ENCODE measurements at regions of chrX and their contacts with region 1.

Region 1: GRCh38 chrX:133792198-133792953 is 193.0 kb downstream of the GPC3 start:
- DNase-seq: peak; percentile 57 to 83 (median 68)
- ATAC-seq: peak; percentile 78 to 81
- H3K4me3 ChIP-seq: peak overlapping the region; percentile 36
- H3K27ac ChIP-seq: no peak overlapping the region
- H3K4me1 ChIP-seq: no peaks in the 10 kb centered on the region
- H3K27me3 ChIP-seq: no peaks in the 10 kb centered on the region

Region 2: DNA sequence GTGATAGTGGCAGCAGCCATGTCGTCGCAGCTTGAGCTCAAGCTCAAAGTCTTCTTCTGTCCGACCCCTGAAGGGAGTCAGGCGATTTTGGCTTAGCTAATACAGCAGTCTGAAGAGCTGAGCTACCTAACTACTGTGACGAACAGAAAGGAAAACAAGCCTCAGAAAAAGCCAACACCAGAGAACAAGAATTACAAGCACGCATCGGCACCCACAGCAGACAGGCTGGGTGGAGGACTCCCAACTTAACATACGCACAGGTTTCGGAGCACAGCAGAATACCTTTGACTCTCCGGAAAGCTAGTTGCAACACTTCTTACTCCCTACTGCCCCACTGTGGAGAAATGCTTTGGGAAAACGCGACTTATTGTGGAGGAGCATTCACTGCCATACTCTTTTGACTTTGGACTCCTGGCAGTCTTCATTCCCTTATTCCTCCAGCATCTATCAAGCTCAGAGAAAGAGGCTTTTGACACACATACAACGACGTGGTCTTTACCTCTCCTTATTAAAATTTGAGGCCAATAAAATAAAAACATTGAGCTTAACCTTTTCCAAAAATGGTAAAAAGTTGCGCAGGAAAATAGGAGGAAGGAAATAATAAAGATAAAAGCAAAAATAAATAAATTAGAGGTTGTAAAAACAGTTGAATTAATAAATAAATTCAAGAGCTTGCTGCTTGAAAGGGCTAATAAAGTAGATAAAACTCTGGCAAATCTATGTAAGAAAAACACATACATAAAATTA is 234.4 kb after region 1 on chrX:
- intact Hi-C with region 1: loop called in 1 of 4 experiments (anchors 5 kb)
- DNase-seq: no peak
- ATAC-seq: peak; percentile 53 to 75
- H3K4me3 ChIP-seq: peak overlapping the region; percentile 22
- H3K27ac ChIP-seq: no peak overlapping the region
- H3K4me1 ChIP-seq: no peaks in the 10 kb centered on the region
- H3K27me3 ChIP-seq: no peaks in the 10 kb centered on the region